ENCODE measurements at regions of chr15 and their contacts with region 1.

Region 1: DNA sequence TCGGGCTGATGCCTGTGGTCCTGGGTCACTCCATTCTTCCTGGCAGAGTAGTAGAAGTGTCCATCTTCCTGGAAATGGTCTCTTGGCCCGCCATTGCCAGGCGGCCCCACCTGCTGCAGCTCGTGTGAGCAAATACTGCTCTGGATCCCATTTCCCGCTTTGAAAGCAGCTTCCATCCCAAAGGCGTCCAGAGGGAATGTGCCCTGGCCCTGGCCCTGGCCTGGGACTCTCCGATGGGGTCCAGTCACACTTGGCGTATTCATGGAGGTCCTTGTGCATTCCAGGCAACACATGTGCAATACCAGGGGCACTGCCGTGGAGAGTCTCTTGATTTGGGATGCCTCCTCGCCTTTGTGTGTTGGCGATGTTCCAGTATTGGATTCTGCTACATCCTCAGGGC is 111.1 kb downstream of the SNRPN start:
- DNase-seq: no peak
- ATAC-seq: no peak
- H3K4me3 ChIP-seq: no peak overlapping the region
- H3K4me3 Mint-ChIP-seq: no peak overlapping the region
- H3K27ac ChIP-seq: no peak overlapping the region
- H3K27ac Mint-ChIP-seq: no peak overlapping the region
- H3K4me1 ChIP-seq: no peaks in the 10 kb centered on the region
- H3K4me1 Mint-ChIP-seq: no peaks in the 10 kb centered on the region
- H3K27me3 ChIP-seq: no peaks in the 10 kb centered on the region
- H3K27me3 Mint-ChIP-seq: no peaks in the 10 kb centered on the region
- CTCF ChIP-seq: no peak

Region 2: DNA sequence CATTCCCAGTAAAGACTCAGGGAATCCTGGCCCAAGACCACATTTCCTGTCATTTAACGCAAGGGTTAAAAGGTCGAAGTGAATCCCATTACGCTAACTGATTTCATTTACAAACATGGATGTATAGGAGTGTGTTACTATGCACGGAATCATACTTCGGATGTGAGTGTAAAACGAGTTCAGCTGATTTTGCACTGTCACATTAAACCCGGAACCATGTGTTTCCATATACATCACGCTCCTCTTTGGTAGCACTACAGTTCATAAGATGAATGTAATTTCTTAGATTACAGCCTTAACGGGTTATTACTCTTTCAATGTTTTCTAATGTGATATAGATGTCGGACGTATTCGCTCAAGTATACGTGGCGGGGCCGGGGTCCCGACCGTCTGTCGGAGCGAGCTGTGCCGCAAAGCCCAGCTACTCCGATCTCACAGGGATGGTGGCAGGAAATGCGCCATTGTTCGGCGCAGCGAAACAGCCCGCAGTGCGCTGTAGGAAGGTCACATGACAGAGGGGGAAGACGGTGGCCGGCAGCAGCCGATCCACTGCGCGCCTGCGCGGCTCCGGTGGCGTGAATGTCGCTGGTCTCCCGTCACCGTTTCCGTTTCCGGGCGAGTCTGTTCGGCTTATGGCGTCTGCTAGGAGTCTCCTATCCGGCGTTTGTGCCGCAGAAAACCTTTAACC is 293.0 kb before region 1 on chr15:
- CTCF ChIA-PET with region 1: no interaction called
- POLR2A ChIA-PET with region 1: no interaction called
- intact Hi-C with region 1: loop called in 1 of 2 experiments (anchors 10 kb)
- DNase-seq: peak; percentile 7 to 82 (median 60)
- ATAC-seq: peak; percentile 85
- H3K4me3 ChIP-seq: peak overlapping the region; percentile 45 to 56
- H3K4me3 Mint-ChIP-seq: peak overlapping the region; percentile 85
- H3K27ac ChIP-seq: peak overlapping the region; percentile 20 to 53
- H3K27ac Mint-ChIP-seq: peak overlapping the region; percentile 94
- H3K4me1 ChIP-seq: no peaks in the 10 kb centered on the region
- H3K4me1 Mint-ChIP-seq: peaks cover 6% of the 10 kb centered on the region
- H3K27me3 ChIP-seq: no peaks in the 10 kb centered on the region
- H3K27me3 Mint-ChIP-seq: peaks cover 6% of the 10 kb centered on the region
- CTCF ChIP-seq: no peak

Region 3: DNA sequence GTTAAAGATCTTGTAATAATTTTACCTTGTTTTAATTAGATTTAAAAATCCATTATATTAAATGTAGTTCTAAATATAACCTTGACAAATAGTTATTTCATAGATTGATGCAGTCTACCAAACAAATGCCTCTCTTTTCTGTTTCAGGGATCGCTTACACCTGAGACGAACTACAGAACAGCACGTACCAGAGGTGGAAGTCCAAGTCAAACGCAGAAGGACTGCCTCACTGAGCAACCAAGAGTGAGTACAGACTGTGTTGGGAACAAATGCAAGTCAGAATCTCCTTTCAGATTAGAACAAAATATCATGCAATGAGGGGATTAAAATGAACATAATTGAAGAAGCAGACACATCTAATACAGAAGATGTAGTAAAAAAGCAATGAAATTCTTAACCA is 103.9 kb before region 1 on chr15:
- CTCF ChIA-PET with region 1: no interaction called
- POLR2A ChIA-PET with region 1: no interaction called
- intact Hi-C with region 1: loop called in 1 of 2 experiments (anchors 5 kb)
- DNase-seq: no peak
- ATAC-seq: no peak
- H3K4me3 ChIP-seq: no peak overlapping the region
- H3K4me3 Mint-ChIP-seq: no peak overlapping the region
- H3K27ac ChIP-seq: no peak overlapping the region
- H3K27ac Mint-ChIP-seq: no peak overlapping the region
- H3K4me1 ChIP-seq: peaks cover 4% of the 10 kb centered on the region
- H3K4me1 Mint-ChIP-seq: peaks cover 24% of the 10 kb centered on the region
- H3K27me3 ChIP-seq: no peaks in the 10 kb centered on the region
- H3K27me3 Mint-ChIP-seq: no peaks in the 10 kb centered on the region
- CTCF ChIP-seq: no peak

Region 4: GRCh38 chr15:25136119-25136518 is 70.2 kb after region 1 on chr15:
- CTCF ChIA-PET with region 1: no interaction called
- POLR2A ChIA-PET with region 1: no interaction called
- intact Hi-C with region 1: no loop called
- DNase-seq: no peak
- ATAC-seq: no peak
- H3K4me3 ChIP-seq: no peak overlapping the region
- H3K4me3 Mint-ChIP-seq: no peak overlapping the region
- H3K27ac ChIP-seq: no peak overlapping the region
- H3K27ac Mint-ChIP-seq: no peak overlapping the region
- H3K4me1 ChIP-seq: no peaks in the 10 kb centered on the region
- H3K4me1 Mint-ChIP-seq: no peaks in the 10 kb centered on the region
- H3K27me3 ChIP-seq: no peaks in the 10 kb centered on the region
- H3K27me3 Mint-ChIP-seq: no peaks in the 10 kb centered on the region
- CTCF ChIP-seq: no peak

Measured in CD8-positive, alpha-beta T cell (primary cell).